ENCODE measurements at regions of chr14 and their contacts with region 1.

Region 1: DNA sequence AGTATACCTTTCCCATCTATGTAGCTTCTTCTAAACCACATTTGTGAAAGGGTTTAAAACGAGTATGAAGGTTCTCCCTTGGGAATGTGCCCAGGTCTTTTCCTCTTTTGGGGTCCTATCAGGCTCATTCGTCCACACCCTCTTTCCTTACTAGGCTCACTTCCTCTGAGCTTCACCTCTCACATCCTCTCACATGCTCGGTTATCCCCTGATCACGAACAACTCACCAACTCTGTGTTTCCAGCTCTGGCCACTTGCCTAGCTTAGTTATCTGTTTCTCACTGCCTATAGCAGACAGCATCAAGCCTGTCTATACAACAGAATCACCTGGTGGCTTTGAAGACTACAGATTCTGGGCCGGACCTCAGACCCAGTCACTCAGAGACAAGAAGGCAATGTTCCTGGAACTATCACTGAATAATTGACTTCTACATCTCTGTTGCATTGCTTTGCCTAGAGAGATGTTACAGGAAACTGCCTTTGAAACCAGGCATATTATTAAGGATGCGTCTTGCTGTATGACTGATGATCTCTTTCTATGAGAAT is 158.2 kb downstream of the FOXN3 start:
- DNase-seq: no peak

Region 2: GRCh38 chr14:87457727-87458126 is 1801.1 kb before region 1 on chr14:
- intact Hi-C with region 1: no loop called
- DNase-seq: no peak

Region 3: DNA sequence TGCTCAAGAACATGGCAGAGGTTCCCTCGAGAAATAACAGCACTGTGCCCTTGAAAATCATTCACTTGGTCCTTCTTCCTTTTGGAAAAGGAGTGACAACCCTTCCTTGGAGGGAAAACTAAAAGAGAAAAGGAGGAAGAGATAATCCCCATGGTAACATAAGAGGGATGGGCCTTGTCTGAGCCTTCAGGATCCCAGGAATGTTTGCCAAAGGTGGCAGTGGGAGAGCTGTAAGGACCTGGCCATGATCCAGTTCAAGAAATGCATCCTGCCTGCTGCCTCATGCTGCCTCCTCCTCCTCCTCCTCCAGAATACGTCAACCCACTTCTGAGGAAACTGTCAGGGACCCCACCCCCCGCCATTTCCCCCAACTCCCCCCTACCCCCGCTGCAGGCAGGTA is 1054.6 kb before region 1 on chr14:
- intact Hi-C with region 1: loop called in 1 of 2 experiments (anchors 5 kb)
- DNase-seq: no peak

Region 4: DNA sequence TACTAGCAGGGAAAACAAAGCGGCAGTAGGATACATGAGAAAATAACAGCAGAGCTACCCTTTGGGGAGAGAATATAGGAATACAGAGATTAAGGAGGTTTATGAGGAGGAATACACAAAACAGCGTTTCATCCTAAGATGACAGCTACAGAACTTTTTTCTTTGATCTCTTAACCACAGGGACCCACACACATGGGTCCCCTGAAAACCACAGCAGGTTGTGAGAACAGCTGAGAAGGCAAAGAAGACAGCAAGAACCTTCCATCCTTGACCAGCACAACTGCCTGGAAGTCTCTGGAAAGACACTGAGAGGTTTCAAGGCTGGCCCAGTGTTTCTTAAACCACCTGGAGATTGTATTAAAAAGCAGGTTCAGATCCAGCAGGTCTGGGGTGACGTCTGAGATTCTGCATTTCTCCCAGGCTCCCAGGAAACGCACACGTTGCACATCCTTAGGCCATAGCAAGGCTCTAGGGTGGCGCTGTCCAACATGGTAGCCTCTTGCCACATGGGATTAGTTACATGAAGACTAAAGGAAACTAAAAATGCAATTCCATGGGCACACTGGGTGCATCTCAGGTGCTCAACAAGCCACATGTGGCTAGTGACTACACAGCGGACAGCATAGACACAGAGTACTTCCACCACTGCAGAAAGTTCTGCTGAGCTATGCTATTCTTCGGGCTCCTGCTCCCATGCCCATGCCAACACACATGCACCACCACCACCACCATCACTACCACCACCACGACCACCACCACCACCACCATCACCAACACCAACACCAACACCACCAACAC is 65.9 kb after region 1 on chr14:
- intact Hi-C with region 1: no loop called
- DNase-seq: no peak

Region 5: GRCh38 chr14:89589400-89590118 is 330.8 kb after region 1 on chr14:
- intact Hi-C with region 1: no loop called
- DNase-seq: no peak

Region 6: DNA sequence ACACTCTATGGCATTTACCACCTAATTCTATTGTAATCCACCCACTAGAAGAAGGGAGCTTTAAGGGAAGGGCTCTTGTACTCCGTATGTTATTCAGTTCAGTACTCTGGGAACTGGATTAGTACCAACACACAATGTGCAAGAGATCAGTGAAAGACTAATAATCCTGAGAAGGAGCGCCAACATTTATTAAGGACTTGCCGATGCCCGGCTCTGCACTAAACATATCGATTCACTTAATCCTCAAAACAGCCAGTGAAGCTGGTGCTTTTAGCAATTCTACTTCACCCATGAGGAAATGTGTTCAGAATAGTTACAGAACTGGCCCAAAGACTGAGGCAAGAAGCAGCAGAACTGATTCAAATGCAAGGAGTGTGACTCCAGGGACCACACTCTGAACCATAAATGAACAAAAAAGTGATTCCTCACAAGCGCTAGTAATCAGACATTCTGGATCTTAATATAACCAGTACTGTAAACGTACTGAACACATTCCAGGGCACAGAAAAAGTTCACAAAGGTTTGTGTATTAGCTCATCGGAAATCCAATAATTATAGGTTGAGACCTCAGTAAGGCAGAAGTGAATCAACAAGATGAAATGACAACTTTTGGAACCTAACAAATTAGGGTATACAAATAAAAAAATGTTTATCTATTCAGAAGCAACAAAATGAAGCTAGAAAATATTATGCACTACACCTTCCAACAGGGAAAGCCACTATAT is 1720.9 kb after region 1 on chr14:
- intact Hi-C with region 1: no loop called
- DNase-seq: no peak

Measured in posterior vena cava (tissue), 2 donors.